ENCODE measurements at regions of chr3 and their contacts with region 1.

Region 1: DNA sequence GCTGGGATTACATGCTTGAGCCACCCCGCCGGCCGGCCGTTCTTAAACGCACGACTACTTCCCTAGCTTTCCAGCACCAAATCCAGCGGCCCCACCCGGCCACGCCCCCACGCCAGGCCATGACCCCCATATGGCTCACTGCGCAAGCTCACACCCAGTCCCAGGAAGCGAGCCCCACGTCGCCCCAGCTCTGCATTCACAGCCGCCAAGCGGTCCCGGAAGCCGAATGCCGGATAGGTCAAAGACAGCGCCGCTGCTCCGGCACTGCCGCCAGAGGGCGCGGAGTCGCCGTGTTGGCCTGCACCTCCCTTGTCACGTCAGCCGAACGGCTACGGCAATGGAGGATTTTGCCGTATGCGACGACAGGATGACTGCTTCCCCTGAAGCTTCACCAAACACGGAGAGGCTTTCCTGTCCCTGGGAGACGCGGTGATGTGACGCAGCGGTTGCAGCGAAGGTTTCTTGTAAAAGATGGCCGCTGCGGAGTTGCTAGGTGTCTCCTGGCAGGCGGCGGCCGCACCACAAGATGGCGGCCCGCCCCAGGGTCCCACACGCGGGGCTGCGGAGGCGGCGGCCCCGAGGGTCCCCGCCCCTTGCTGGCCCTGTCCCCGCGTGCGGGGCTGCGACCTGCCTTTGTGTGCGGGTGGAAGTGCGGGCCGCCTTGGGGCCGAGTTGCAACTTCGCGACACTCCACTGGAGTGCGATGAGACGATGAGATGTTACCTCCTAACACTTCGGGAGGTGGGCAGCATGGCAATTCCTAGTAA is 30.2 kb upstream of the RPN1 start:
- DNase-seq: peak; percentile 94 to 97 (median 96)
- H3K4me3 ChIP-seq: peak overlapping the region; percentile 66
- H3K4me3 Mint-ChIP-seq: peak overlapping the region; percentile 92 to 96 (median 95)
- H3K27ac ChIP-seq: peak overlapping the region; percentile 76
- H3K27ac Mint-ChIP-seq: peak overlapping the region; percentile 93 to 100 (median 98)
- H3K4me1 ChIP-seq: peaks cover 18% of the 10 kb centered on the region
- H3K4me1 Mint-ChIP-seq: peaks cover 19 to 30% (median 26%) of the 10 kb centered on the region in 3 donors
- H3K27me3 ChIP-seq: no peaks in the 10 kb centered on the region
- H3K27me3 Mint-ChIP-seq: no peaks in the 10 kb centered on the region

Region 2: GRCh38 chr3:128655531-128655930 is 25.3 kb before region 1 on chr3:
- CTCF ChIA-PET with region 1: interaction called, 16 read pairs
- POLR2A ChIA-PET with region 1: interaction called, 14 read pairs
- DNase-seq: no peak
- H3K4me3 ChIP-seq: no peak overlapping the region
- H3K4me3 Mint-ChIP-seq: peak overlapping the region in 6 of 7 donors; percentile 30 to 92 (median 52)
- H3K27ac ChIP-seq: no peak overlapping the region
- H3K27ac Mint-ChIP-seq: peak overlapping the region in 1 of 8 donors; percentile 83
- H3K4me1 ChIP-seq: peaks cover 6% of the 10 kb centered on the region
- H3K4me1 Mint-ChIP-seq: peaks cover 9 to 26% (median 9%) of the 10 kb centered on the region in 3 donors
- H3K27me3 ChIP-seq: no peaks in the 10 kb centered on the region
- H3K27me3 Mint-ChIP-seq: peaks cover 2 to 3% of the 10 kb centered on the region in 2 donors

Region 3: GRCh38 chr3:128698211-128699064 is 17.7 kb after region 1 on chr3:
- CTCF ChIA-PET with region 1: no interaction called
- POLR2A ChIA-PET with region 1: no interaction called
- DNase-seq: peak in 1 of 5 donors; percentile 25
- H3K4me3 ChIP-seq: peak overlapping the region; percentile 41
- H3K4me3 Mint-ChIP-seq: peak overlapping the region in 6 of 7 donors; percentile 59 to 77 (median 70)
- H3K27ac ChIP-seq: no peak overlapping the region
- H3K27ac Mint-ChIP-seq: no peak overlapping the region
- H3K4me1 ChIP-seq: no peaks in the 10 kb centered on the region
- H3K4me1 Mint-ChIP-seq: peaks cover 0 to 7% (median 0%) of the 10 kb centered on the region in 3 donors
- H3K27me3 ChIP-seq: no peaks in the 10 kb centered on the region
- H3K27me3 Mint-ChIP-seq: peaks cover 7 to 11% of the 10 kb centered on the region in 2 donors

Region 4: DNA sequence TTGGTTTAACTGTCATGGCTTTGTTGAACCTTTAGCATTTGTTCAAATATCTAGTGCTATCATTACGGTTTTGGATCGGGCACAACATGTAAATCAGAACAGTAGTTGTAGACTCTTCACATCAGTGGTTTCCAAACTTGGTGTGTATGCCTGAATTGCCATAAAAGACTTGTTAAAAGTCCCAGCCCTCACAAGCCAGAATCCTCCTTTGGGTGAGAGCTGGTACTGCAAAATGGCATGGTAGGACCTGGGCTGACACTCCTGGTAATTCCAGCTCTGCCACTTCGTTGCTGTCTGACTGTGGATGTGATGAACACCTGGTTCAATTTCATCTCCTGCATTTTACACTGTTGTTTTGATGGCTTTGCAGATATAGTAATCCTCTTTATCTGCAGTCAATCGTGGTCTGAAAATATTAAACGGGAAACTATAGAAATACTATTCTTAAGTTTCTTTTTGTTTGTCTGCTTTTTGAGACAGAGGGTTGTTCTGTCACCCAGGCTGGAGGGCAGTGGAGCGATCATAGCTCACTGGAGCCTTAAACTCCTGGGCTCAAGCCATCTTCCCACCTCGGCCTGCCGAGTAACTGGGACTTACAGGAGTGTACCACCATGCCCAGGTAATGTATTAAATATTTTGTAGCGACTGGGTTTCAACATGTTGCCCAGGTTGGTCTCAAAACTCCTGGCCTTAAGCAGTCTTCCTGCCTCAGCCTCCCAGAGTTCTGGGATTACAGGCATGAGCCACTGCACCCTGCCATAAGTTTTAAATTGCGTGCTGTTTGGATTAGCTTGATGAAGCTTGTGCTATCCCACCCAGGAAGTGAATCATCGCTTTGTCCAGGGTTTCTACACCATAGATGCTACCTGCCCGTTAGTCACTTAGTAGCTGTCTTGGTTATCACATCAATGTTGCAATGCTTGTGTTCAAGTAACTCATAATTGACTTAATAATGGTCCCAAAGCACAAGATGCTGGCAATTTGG is 106.8 kb after region 1 on chr3:
- CTCF ChIA-PET with region 1: interaction called, 65 read pairs
- POLR2A ChIA-PET with region 1: interaction called, 7 read pairs
- DNase-seq: peak in 3 of 5 donors; percentile 10 to 50 (median 17)
- H3K4me3 ChIP-seq: peak overlapping the region; percentile 32
- H3K4me3 Mint-ChIP-seq: peak overlapping the region; percentile 57 to 92 (median 77)
- H3K27ac ChIP-seq: no peak overlapping the region
- H3K27ac Mint-ChIP-seq: peak overlapping the region; percentile 68 to 97 (median 90)
- H3K4me1 ChIP-seq: peaks cover 81% of the 10 kb centered on the region
- H3K4me1 Mint-ChIP-seq: peaks cover 70 to 91% (median 85%) of the 10 kb centered on the region in 3 donors
- H3K27me3 ChIP-seq: no peaks in the 10 kb centered on the region
- H3K27me3 Mint-ChIP-seq: no peaks in the 10 kb centered on the region

Region 5: DNA sequence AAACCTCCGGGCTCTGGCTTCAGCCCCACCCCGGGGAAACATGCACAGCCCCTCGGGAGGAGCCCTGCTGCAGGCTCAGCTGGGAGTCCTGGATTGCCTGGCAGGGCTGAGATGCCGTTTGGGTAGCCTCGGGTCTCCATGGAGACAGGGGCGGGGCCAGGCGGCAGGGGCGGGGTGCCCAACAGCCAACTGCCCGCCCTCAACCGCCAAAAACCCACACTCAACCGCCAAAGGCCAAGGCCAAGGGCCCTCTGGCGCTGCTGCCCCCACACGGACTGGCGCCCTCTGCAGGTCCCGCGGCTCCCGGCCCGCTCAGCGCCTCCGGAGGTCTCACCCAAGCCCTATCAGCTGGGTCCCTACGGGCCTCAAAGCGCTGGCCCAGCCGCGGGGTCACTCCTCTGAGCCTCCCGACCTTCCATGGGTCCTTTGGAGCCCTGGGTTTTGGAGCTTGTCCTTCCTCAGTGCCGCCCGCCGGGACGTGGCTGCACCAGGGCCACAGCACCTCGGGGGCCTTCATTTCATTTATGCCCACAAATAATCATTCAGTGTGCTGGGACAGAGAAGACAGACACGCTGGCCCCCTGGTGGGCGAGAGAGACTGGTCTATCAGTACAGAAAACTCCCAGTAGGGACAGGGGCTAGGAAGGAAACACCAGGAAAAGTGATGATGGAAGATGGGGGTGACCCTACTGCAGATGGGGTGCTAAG is 165.1 kb after region 1 on chr3:
- CTCF ChIA-PET with region 1: interaction called, 13 read pairs
- POLR2A ChIA-PET with region 1: no interaction called
- DNase-seq: peak; percentile 69 to 84 (median 70)
- H3K4me3 ChIP-seq: peak overlapping the region; percentile 54
- H3K4me3 Mint-ChIP-seq: peak overlapping the region; percentile 46 to 95 (median 83)
- H3K27ac ChIP-seq: peak overlapping the region; percentile 29
- H3K27ac Mint-ChIP-seq: peak overlapping the region in 7 of 8 donors; percentile 27 to 90 (median 79)
- H3K4me1 ChIP-seq: peaks cover 11% of the 10 kb centered on the region
- H3K4me1 Mint-ChIP-seq: peaks cover 8 to 13% (median 12%) of the 10 kb centered on the region in 3 donors
- H3K27me3 ChIP-seq: no peaks in the 10 kb centered on the region
- H3K27me3 Mint-ChIP-seq: no peaks in the 10 kb centered on the region